H1 (cell line): ENCODE measurements at regions of chr16 and their contacts with region 1.

Region 1: DNA sequence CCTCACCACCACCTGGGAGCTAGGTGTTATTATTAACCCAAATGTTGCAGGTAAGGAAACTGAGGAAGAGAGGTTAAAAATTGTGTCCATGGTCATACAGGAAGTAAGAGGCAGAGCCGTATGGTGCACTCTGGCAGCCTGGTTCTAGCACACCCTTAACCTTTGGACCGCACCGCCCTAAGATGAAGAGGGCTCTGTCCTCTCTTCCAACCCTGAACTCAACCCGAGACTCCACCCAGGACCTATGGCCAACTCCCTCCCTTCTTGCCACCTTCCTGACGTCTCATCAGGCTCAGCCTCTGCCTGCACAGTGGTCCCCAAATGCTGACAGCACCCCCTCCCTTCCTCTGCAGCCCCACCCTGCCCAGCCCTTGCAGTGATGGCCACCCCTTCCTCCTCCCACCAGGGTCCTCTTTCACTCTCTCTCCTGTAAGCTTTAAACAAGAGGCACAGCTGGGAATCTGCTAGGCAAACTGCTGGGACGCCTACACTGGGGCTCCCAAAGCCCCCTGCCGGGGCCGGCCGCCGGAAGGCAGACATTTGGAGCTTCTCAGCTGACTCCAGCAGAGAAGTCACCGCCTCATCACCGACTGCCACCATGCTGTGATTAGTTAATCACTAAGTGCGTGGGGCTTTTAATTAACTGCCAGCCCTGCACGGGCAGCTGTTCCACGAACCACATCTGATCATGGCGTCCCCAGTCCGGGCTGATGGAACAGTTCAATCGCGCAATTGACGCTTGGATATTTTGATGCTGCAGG is 16.7 kb upstream of the C16orf78 start:
- DNase-seq: no peak
- H3K4me3 ChIP-seq: no peak overlapping the region
- H3K27ac ChIP-seq: no peak overlapping the region
- H3K4me1 ChIP-seq: peaks cover 0 to 4% (median 0%) of the 10 kb centered on the region in 4 experiments; a peak in 3 of 7 replicates
- H3K27me3 ChIP-seq: no peaks in the 10 kb centered on the region
- CTCF ChIP-seq: no peak
- EP300 ChIP-seq: no peak
- POLR2A ChIP-seq: no peak
- RAD21 ChIP-seq: no peak

Region 2: DNA sequence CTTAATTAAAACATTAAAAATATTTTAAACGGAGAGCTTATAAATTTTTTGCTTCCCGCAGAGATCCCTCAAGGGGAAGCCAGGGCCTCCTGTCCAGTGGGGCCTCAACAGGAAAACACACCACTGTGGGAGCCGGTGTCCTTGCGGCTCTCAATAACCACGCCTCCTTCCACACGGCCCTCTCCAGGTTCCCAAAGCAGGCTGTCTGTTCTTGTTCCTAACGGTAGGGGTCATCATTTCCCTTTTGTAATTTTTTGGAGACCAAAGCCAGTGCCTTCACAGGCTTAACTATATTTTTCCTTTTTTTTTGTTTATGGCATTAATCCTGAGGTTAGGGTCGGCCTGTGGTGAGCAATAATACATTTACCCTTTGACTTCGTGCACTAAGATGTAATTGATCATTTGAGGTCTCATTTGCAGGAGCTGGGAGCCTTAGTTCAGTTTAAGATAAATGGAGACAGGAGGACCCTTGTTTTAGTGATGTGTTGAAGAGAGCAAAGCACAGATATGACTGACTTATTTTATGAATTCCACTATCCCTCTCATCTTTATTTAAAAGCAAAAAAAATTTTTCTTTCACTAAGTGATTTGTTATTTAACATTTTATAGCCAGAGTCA is 669.4 kb before region 1 on chr16:
- CTCF ChIA-PET with region 1: interaction called, 12 read pairs
- POLR2A ChIA-PET with region 1: no interaction called
- DNase-seq: peak in 1 of 2 experiments; percentile 53
- H3K4me3 ChIP-seq: no peak overlapping the region
- H3K27ac ChIP-seq: no peak overlapping the region
- H3K4me1 ChIP-seq: no peaks in the 10 kb centered on the region
- H3K27me3 ChIP-seq: no peaks in the 10 kb centered on the region
- CTCF ChIP-seq: peak; percentile 53 to 77 (median 68)
- EP300 ChIP-seq: no peak
- POLR2A ChIP-seq: no peak
- RAD21 ChIP-seq: peak; percentile 86 to 88

Region 3: DNA sequence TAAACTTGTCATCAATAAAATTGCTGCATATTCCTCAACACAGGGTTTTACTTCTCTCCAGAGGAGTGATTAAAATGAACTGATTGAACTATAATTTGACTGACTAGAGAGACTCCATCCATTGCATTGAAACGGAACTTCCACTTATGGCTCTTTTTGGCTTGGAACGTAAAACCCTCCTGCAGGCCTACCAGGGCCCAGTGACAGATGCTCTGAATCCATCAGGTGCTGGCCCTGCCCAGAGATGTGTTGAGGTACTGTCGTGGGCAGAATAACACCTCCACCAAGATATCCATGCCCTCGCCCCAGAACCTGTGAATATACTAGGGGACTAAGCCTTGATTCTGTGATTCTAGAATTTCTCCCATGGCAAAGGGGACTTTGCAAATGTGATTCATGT is 120.7 kb before region 1 on chr16:
- CTCF ChIA-PET with region 1: no interaction called
- POLR2A ChIA-PET with region 1: no interaction called
- DNase-seq: no peak
- H3K4me3 ChIP-seq: no peak overlapping the region
- H3K27ac ChIP-seq: no peak overlapping the region
- H3K4me1 ChIP-seq: no peaks in the 10 kb centered on the region
- H3K27me3 ChIP-seq: no peaks in the 10 kb centered on the region
- CTCF ChIP-seq: no peak
- EP300 ChIP-seq: no peak
- POLR2A ChIP-seq: no peak
- RAD21 ChIP-seq: no peak

Region 4: GRCh38 chr16:49327466-49327865 is 29.4 kb before region 1 on chr16:
- CTCF ChIA-PET with region 1: no interaction called
- POLR2A ChIA-PET with region 1: no interaction called
- DNase-seq: no peak
- H3K4me3 ChIP-seq: no peak overlapping the region
- H3K27ac ChIP-seq: no peak overlapping the region
- H3K4me1 ChIP-seq: peaks cover 0 to 2% (median 0%) of the 10 kb centered on the region in 4 experiments; a peak in 1 of 7 replicates
- H3K27me3 ChIP-seq: no peaks in the 10 kb centered on the region; a peak in 1 of 7 replicates
- CTCF ChIP-seq: no peak
- EP300 ChIP-seq: no peak
- POLR2A ChIP-seq: no peak
- RAD21 ChIP-seq: no peak

Region 5: DNA sequence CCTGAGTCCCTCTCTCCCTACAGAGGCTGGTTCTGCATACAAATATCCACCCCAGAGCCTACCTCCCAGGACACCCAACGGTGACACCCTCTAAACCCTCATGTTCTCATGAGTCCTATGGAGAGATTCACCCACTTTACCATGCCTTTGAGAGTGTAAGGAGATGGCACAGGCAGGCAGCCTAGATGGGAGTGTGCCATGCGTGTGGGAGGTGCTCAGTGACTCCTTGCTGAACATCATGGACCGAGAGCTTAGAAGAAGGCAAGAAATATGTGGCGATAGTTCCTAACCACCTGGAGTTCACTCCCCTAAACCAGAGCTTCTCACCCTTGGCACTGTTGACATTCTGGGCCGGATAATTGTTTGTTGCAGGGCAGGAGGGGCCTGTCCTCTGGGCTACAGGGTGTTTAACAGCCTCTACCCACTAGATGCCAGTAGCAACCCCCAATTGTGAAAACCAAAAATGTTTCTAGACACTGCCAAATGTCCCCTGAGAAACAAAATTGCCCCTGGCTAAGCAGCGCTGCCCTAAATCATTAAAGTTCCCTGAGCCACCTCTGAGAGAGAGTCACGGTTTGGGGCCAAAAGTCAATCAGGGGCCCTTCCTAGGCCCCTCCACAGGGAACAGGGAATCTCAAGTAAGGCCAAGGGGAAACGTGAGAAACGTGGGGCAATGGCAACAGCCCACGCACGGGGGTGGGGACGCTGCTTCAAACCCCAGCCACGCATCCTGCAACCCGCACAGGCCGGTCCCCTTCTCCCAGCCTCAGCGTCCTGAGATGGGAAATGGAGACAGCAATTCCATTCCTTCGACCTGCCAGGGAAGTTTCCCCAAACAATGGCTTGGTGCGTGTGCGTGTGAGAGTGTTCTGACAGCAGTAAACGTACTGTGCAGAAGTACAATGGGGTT is 83.5 kb after region 1 on chr16:
- CTCF ChIA-PET with region 1: no interaction called
- POLR2A ChIA-PET with region 1: no interaction called
- DNase-seq: no peak
- H3K4me3 ChIP-seq: no peak overlapping the region
- H3K27ac ChIP-seq: no peak overlapping the region
- H3K4me1 ChIP-seq: peaks cover 8 to 23% (median 18%) of the 10 kb centered on the region in 4 experiments
- H3K27me3 ChIP-seq: no peaks in the 10 kb centered on the region; a peak in 1 of 7 replicates
- CTCF ChIP-seq: peak; percentile 0 to 35 (median 32)
- EP300 ChIP-seq: no peak
- POLR2A ChIP-seq: no peak
- RAD21 ChIP-seq: peak; percentile 42 to 59

Region 6: DNA sequence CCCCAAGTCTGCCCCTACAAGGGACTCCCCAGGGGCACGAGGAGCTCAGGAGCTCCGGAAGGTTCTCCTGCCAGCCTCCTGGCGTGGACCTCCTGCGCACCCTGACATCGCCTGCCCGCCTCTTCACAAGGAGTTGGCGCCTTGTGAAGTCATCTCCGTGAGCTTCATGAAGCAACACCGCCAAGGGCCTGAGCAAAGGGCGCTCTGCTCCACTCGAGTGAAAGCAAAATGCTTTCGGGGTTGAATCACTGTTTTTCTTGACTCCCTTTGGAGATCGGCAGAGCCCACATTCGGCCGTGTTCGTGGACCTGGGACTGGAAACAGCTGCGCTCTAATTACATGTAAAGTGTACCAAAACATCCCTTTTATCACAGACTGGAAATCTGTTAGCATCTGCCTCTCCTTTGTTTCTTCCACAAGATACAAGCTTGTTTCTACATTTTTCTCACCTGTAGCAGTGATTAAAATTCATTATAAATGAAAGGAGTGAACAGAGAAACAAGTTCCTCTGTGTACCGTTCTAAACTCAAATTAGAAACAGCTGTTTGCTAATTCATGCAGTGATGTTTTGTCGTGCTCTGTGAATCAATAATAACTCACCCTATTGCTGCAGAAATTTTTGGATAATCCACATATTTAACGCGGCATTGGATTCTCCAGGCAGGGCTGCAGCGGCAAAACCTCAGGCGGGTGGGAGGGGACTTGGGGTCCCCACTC is 295.7 kb after region 1 on chr16:
- CTCF ChIA-PET with region 1: no interaction called
- POLR2A ChIA-PET with region 1: no interaction called
- DNase-seq: no peak
- H3K4me3 ChIP-seq: no peak overlapping the region
- H3K27ac ChIP-seq: no peak overlapping the region
- H3K4me1 ChIP-seq: peaks cover 0 to 6% (median 0%) of the 10 kb centered on the region in 4 experiments; a peak in 2 of 7 replicates
- H3K27me3 ChIP-seq: no peaks in the 10 kb centered on the region
- CTCF ChIP-seq: no peak
- EP300 ChIP-seq: no peak
- POLR2A ChIP-seq: no peak
- RAD21 ChIP-seq: no peak